Calu3 (cell line): ENCODE measurements at regions of chr5 and their contacts with region 1.

Region 1: GRCh38 chr5:40688127-40688761 is 8.5 kb downstream of the PTGER4 start:
- DNase-seq: peak; percentile 84
- H3K4me3 Mint-ChIP-seq: peak overlapping the region; percentile 29
- H3K27ac Mint-ChIP-seq: peak overlapping the region; percentile 43
- H3K4me1 Mint-ChIP-seq: peaks cover 28% of the 10 kb centered on the region
- H3K27me3 Mint-ChIP-seq: no peaks in the 10 kb centered on the region
- CTCF ChIP-seq: peak; percentile 75

Region 2: GRCh38 chr5:39578887-39579497 is 1109.3 kb before region 1 on chr5:
- CTCF ChIA-PET with region 1: no interaction called
- intact Hi-C with region 1: loop called (anchors 5 kb)
- DNase-seq: no peak
- H3K4me3 Mint-ChIP-seq: no peak overlapping the region
- H3K27ac Mint-ChIP-seq: no peak overlapping the region
- H3K4me1 Mint-ChIP-seq: peaks cover 18% of the 10 kb centered on the region
- H3K27me3 Mint-ChIP-seq: no peaks in the 10 kb centered on the region
- CTCF ChIP-seq: peak; percentile 42

Region 3: DNA sequence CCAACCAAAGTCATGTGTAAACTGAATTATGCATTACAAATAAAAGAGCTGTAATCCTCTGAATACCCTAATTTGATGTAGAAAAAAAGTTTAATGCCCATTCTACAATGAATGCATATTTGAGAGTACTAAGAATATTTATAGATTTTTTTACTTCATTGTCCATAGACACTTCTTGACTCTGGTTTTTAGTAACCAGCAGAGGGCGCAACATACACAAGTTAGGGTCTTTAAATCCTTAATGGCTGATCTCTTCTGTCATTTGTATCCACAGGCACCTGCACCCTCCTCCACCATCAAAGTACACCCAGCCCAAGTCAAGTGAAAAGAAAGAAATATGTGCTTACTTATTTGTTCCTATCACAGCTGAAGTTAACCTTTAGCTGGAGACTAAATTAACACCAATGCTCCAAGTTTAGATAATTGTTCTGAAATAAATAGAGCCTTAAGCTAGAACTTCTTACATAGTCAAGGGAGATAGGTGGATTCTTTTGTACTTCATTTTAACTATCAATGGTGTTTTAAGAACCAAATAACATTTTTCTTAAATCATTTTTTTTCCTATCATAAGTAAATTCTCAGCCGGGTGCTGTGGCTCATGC is 739.3 kb before region 1 on chr5:
- CTCF ChIA-PET with region 1: no interaction called
- intact Hi-C with region 1: loop called (anchors 1 kb)
- DNase-seq: peak; percentile 64
- H3K4me3 Mint-ChIP-seq: no peak overlapping the region
- H3K27ac Mint-ChIP-seq: no peak overlapping the region
- H3K4me1 Mint-ChIP-seq: peaks cover 7% of the 10 kb centered on the region
- H3K27me3 Mint-ChIP-seq: no peaks in the 10 kb centered on the region
- CTCF ChIP-seq: peak; percentile 72

Region 4: DNA sequence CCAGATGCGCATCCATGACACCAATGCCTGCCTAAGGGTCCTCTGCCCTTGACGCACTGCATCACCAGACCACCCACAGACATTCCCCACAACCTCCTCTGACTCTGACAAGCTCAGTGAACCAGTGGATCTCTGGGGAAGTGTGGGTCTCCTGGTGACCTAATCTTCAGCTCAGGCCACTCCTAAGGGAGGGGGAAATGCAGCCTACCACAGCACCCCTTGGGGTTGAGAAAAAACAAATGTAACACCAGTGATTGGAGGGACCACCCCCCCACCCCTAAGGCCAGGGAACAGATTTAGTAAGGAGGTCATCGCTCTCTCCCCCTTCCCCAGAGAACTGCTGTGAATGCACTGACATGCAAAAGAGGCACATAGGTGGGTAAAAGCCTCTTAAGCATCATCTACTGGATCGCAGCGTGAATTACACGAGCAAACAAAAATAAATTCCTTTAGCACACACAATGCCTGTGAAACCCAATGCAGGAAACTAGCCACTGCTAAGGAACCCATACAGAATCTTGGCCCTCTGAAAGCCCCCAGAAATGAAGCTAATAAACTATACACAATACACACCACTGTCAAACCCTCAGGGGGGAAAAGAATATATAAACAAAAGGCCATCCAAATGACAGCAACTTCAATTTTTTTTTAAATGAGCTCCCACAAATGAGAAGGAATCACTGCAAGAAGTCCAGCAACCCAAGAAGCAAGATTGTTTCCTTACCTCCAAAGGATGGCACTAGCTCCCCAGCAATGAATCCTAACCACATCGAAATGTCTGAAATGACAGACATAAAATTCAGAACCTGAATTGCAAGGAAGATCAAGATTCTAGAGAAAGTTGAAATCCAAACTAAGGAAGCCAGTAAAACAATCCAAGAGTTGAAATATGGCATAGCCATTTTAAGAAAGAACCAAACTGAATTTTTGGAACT is 522.2 kb before region 1 on chr5:
- CTCF ChIA-PET with region 1: no interaction called
- intact Hi-C with region 1: loop called (anchors 5 kb)
- DNase-seq: no peak
- H3K4me3 Mint-ChIP-seq: no peak overlapping the region
- H3K27ac Mint-ChIP-seq: no peak overlapping the region
- H3K4me1 Mint-ChIP-seq: peaks cover 14% of the 10 kb centered on the region
- H3K27me3 Mint-ChIP-seq: no peaks in the 10 kb centered on the region
- CTCF ChIP-seq: no peak

Region 5: DNA sequence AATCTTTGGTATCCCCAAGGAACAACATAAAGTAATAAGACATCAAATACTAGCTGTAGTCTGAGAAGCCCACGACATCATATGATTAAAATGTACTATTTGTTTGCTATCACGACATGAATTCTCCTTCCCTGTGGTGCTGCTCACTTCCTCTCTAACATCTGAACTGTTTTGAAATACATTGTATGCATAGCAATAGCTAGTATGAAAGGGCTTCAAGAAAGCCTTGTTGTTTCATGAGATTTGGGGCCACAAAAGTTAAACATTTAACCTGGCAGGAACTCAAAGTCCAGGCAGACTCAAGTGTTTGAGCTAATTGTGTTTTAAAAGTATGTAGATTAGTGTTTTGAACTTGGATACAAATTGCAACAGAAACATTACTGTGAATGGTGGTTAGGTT is 245.9 kb before region 1 on chr5:
- CTCF ChIA-PET with region 1: no interaction called
- intact Hi-C with region 1: loop called (anchors 5 kb)
- DNase-seq: peak; percentile 6
- H3K4me3 Mint-ChIP-seq: peak overlapping the region; percentile 39
- H3K27ac Mint-ChIP-seq: peak overlapping the region; percentile 88
- H3K4me1 Mint-ChIP-seq: peaks cover 24% of the 10 kb centered on the region
- H3K27me3 Mint-ChIP-seq: no peaks in the 10 kb centered on the region
- CTCF ChIP-seq: no peak

Region 6: DNA sequence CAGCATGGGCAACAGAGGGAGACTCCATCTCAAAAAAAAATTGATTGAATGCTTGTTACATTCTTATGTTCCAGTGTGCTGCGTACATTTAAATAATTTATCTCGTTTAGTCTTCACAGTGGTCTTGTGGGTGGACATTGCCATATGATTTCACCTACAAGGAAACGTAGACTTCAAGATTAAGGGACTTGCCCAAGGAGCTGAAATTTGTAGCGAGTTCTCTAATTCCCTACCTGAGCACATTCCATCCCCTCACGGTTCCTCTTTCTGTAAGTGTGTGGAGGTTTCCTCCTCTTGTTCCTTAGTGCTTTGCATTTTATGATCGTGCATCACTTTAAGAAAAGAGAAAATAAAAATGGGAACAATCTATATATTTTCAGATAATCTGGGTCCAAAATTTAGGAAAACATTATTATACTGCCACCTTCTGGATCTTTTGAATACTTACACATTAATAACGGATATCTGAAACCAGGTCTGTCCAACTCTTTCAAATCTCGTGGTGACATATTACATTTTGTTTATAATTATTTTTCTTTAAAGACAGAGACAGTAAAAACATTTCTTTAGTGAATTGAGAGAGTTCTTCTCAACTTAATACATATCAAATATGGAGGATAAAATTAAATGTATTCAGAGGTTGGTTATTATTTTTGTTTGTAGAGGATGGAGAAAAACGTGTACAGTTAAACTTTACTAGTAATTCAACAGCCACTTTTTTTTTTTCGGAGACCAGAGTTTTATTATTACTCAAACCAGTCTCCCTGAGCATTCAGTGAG is 191.1 kb after region 1 on chr5:
- CTCF ChIA-PET with region 1: no interaction called
- intact Hi-C with region 1: loop called (anchors 2 kb)
- DNase-seq: no peak
- H3K4me3 Mint-ChIP-seq: no peak overlapping the region
- H3K27ac Mint-ChIP-seq: no peak overlapping the region
- H3K4me1 Mint-ChIP-seq: no peaks in the 10 kb centered on the region
- H3K27me3 Mint-ChIP-seq: no peaks in the 10 kb centered on the region
- CTCF ChIP-seq: peak; percentile 30